ENCODE measurements at regions of chr2 and their contacts with region 1.

Region 1: DNA sequence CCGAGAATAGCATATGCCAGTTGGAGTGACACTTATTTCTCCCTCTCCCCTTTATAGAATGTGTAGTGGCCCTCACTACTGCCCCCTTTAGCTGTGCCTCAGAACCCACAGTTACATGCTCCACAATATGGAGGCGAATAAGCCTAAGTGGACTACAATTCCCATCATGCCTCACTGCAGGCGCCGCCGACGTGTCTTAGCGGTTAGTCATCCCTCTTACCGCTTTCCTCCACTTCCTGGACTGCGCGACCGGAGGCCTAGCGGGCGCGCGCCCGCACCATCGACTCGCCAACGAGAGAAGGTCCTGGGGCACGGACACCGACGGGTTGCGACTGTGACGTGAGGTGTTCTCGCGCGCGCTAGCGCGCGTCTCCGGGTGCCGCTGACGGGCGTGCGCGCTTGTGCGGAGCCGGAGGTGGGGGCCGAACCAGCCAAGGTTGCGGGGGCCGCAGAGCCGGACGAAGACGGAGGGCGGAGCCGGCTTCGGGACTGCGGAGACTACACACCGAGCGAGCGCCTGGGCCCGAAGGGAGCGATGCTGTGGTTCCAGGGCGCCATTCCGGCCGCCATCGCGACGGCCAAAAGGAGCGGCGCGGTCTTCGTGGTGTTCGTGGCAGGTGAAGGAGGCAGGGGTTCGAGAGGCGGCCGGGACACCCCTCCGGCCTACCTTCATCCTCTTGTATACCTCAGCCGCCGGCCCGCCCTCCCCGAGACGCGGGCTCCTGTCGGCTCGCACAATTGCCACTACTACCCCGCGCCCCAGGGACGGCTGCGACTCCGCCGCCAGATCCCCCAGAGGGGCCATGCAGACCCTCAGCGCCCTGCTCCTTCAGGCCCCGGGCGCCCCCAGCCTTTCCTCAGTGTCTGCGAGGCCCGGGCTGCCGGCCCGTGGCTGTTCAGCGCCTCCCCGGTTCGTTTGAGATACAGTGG is at the start of gene UBXN4:
- DNase-seq: peak; percentile 97
- H3K4me3 ChIP-seq: peak within 1 kb of the TSS; percentile 87
- H3K27me3 ChIP-seq: no peaks in the 10 kb centered on the region
- CTCF ChIP-seq: peak; percentile 56
- polyA plus RNA-seq, gene UBXN4: 51.1 and 75.6 TPM in 2 replicates

Region 2: GRCh38 chr2:135563793-135564192 is 177.9 kb before region 1 on chr2:
- CTCF ChIA-PET with region 1: no interaction called
- POLR2A ChIA-PET with region 1: no interaction called
- DNase-seq: no peak
- H3K4me3 ChIP-seq: no peak overlapping the region
- H3K27me3 ChIP-seq: no peaks in the 10 kb centered on the region
- CTCF ChIP-seq: no peak

Region 3: GRCh38 chr2:135773917-135774316 is 32.3 kb after region 1 on chr2:
- CTCF ChIA-PET with region 1: no interaction called
- POLR2A ChIA-PET with region 1: interaction called, 11 read pairs
- DNase-seq: no peak
- H3K4me3 ChIP-seq: no peak overlapping the region
- H3K27me3 ChIP-seq: no peaks in the 10 kb centered on the region
- CTCF ChIP-seq: no peak

Region 4: GRCh38 chr2:135785032-135785431 is 43.4 kb after region 1 on chr2:
- CTCF ChIA-PET with region 1: interaction called, 3 read pairs
- POLR2A ChIA-PET with region 1: interaction called, 17 read pairs
- DNase-seq: no peak
- H3K4me3 ChIP-seq: no peak overlapping the region
- H3K27me3 ChIP-seq: no peaks in the 10 kb centered on the region
- CTCF ChIP-seq: 0 out of 2 replicates have a peak, but pooled peaks have one; percentile 18